PC-3 (cell line): ENCODE measurements at regions of chr17 and their contacts with region 1.

Region 1: GRCh38 chr17:21214015-21214776 is at the start of gene TMEM11:
- DNase-seq: peak; percentile 97
- ATAC-seq: peak; percentile 93
- H3K4me3 ChIP-seq: peak within 1 kb of the TSS; percentile 98
- H3K27ac ChIP-seq: peak within 1 kb of the TSS; percentile 83
- H3K4me1 ChIP-seq: peaks cover 46% of the 10 kb centered on the region
- H3K27me3 ChIP-seq: no peaks in the 10 kb centered on the region
- CTCF ChIP-seq: no peak
- total RNA-seq, gene TMEM11: 58.1 and 70.8 TPM in 2 replicates

Region 2: GRCh38 chr17:21129023-21129681 is 85.0 kb before region 1 on chr17:
- CTCF ChIA-PET with region 1: no interaction called
- POLR2A ChIA-PET with region 1: no interaction called
- intact Hi-C with region 1: loop called (anchors 1 kb)
- DNase-seq: peak; percentile 34
- ATAC-seq: no peak
- H3K4me3 ChIP-seq: no peak overlapping the region
- H3K27ac ChIP-seq: no peak overlapping the region
- H3K4me1 ChIP-seq: peaks cover 11% of the 10 kb centered on the region
- H3K27me3 ChIP-seq: no peaks in the 10 kb centered on the region
- CTCF ChIP-seq: peak; percentile 59

Region 3: GRCh38 chr17:21171309-21171922 is 42.8 kb before region 1 on chr17:
- CTCF ChIA-PET with region 1: no interaction called
- POLR2A ChIA-PET with region 1: no interaction called
- intact Hi-C with region 1: no loop called
- DNase-seq: no peak
- ATAC-seq: no peak
- H3K4me3 ChIP-seq: no peak overlapping the region
- H3K27ac ChIP-seq: no peak overlapping the region
- H3K4me1 ChIP-seq: no peaks in the 10 kb centered on the region
- H3K27me3 ChIP-seq: no peaks in the 10 kb centered on the region
- CTCF ChIP-seq: no peak

Region 4: DNA sequence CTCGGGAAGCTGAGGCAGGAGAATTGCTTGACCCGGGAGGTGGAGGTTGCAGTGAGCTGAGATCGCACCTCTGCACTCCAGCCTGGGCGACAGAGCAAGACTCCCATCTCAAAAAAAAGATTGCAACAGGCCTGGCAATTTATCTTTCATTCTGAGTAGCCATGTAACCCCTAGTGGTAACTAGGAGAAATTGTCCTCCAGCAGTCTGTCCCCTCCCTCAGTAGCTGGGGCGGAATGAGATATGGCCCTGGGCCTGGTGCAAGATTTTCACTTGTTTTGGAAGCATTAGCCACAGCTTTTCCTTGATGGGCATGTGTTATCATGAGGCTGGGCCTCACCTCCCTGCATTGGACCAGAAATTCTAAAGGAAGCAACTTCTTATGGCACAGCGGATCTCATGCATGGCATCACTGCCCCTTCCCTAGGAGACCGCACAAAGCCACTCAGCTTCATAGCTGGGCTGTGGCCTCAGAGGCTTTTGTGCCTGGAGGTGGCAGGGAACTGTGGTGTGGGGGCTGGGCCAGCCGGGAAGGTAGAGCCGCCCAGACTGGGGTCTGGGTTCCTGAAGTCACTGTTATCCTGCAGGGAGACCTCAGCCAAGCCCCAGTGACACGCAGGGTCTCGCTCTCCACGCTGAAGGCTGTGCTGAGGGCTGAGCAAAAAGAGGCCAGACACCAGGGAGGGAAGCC is 25.6 kb after region 1 on chr17:
- CTCF ChIA-PET with region 1: no interaction called
- POLR2A ChIA-PET with region 1: no interaction called
- intact Hi-C with region 1: no loop called
- DNase-seq: peak; percentile 58
- ATAC-seq: peak; percentile 68
- H3K4me3 ChIP-seq: no peak overlapping the region
- H3K27ac ChIP-seq: no peak overlapping the region
- H3K4me1 ChIP-seq: no peaks in the 10 kb centered on the region
- H3K27me3 ChIP-seq: no peaks in the 10 kb centered on the region
- CTCF ChIP-seq: peak; percentile 56

Region 5: GRCh38 chr17:21252796-21253645 is 38.8 kb after region 1 on chr17 and contains the start of gene NATD1:
- CTCF ChIA-PET with region 1: no interaction called
- POLR2A ChIA-PET with region 1: no interaction called
- intact Hi-C with region 1: loop called (anchors 5 kb)
- DNase-seq: peak; percentile 75
- ATAC-seq: peak; percentile 66
- H3K4me3 ChIP-seq: peak within 1 kb of the TSS; percentile 66
- H3K27ac ChIP-seq: no peak within 1 kb of the TSS
- H3K4me1 ChIP-seq: peaks cover 8% of the 10 kb centered on the region
- H3K27me3 ChIP-seq: no peaks in the 10 kb centered on the region
- CTCF ChIP-seq: no peak
- total RNA-seq, gene NATD1: 0.69 and 0.73 TPM in 2 replicates